Activated CD8-positive, alpha-beta T cell treated with anti-CD3 and anti-CD28 coated beads for 36 hours (primary cell): ENCODE measurements at regions of chrX and their contacts with region 1.

Region 1: DNA sequence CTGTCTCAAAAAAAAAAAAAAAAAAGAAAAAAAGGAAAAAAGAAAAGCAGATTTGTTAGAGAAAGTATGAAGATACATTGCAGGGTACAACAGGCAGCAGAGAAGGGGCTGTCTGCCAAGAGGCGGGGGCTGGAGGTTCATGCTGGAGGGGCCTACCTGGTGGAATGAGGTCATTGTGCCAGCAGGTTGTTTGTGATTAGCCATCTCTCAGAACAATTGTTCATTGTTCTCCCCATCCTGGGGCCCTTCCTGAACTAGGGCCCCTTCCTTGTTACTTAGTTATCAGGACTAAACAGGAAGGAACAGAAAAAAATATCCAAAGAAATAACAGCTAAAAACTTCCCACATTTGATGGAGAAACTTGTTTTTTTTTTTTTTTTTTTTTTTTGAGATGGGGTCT is 14.0 kb upstream of the GPKOW start:
- DNase-seq: no peak
- ATAC-seq: no peak
- H3K4me3 Mint-ChIP-seq: no peak overlapping the region
- H3K27ac Mint-ChIP-seq: no peak overlapping the region
- H3K4me1 Mint-ChIP-seq: no peaks in the 10 kb centered on the region
- H3K27me3 Mint-ChIP-seq: no peaks in the 10 kb centered on the region
- CTCF ChIP-seq: no peak

Region 2: GRCh38 chrX:48737213-48737938 is 400.1 kb before region 1 on chrX:
- CTCF ChIA-PET with region 1: no interaction called
- POLR2A ChIA-PET with region 1: no interaction called
- intact Hi-C with region 1: no loop called
- DNase-seq: peak; percentile 92
- ATAC-seq: peak; percentile 97
- H3K4me3 Mint-ChIP-seq: peak overlapping the region; percentile 95
- H3K27ac Mint-ChIP-seq: peak overlapping the region; percentile 96
- H3K4me1 Mint-ChIP-seq: peaks cover 14% of the 10 kb centered on the region
- H3K27me3 Mint-ChIP-seq: no peaks in the 10 kb centered on the region
- CTCF ChIP-seq: no peak

Region 3: GRCh38 chrX:49155900-49156837 is 18.7 kb after region 1 on chrX:
- CTCF ChIA-PET with region 1: interaction called, 18 read pairs
- POLR2A ChIA-PET with region 1: no interaction called
- intact Hi-C with region 1: no loop called
- DNase-seq: peak; percentile 86
- ATAC-seq: peak; percentile 90
- H3K4me3 Mint-ChIP-seq: peak overlapping the region; percentile 85
- H3K27ac Mint-ChIP-seq: peak overlapping the region; percentile 97
- H3K4me1 Mint-ChIP-seq: peaks cover 13% of the 10 kb centered on the region
- H3K27me3 Mint-ChIP-seq: no peaks in the 10 kb centered on the region
- CTCF ChIP-seq: peak; percentile 35